Esophagus squamous epithelium (tissue), 5 donors: ENCODE measurements at regions of chr2 and their contacts with region 1.

Region 1: GRCh38 chr2:72770879-72771461 is 54.9 kb downstream of the EXOC6B start:
- DNase-seq: no peak
- H3K4me3 ChIP-seq: no peak overlapping the region
- H3K27ac ChIP-seq: no peak overlapping the region
- H3K4me1 ChIP-seq: peaks cover 0 to 2% (median under 1%) of the 10 kb centered on the region in 3 donors
- H3K27me3 ChIP-seq: no peaks in the 10 kb centered on the region
- CTCF ChIP-seq: peak; percentile 56 to 90 (median 84)
- POLR2A ChIP-seq: no peak

Region 2: DNA sequence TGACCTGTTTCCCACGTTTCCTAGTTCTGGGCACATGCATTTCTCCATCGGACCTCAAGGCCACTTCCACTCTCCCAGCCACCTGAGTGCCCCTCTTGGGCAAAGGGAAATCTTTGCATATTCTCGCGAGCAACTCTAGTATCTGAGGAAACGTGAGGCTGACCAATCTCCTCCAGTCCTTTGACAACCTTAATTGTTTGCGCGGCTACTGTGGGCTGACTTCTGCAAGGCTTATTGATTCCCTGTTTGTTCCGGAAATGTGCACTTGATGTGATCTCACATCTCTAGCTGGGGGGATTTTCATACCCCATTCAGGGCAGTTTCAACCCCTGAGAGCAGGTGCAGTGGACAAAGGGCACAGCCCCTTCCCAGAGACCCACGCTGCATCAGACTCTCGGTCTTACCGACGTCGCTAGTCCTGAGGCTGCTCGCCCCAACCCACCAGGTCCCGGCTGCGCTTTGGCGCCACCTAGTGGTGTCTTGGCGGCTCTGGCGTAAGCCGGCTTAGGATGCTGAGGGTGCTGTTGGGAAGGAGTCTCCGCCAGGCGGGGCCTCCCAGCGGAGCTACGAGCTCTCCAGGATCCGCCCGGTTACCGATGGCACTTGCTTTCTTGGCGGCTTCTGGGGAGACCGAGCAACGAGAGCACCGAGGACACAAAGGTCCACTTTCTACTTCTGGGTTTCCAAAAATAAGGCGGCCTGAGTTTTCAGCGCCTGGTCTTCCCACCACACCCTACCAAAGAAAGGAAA is 91.4 kb after region 1 on chr2:
- intact Hi-C with region 1: loop called (anchors 2 kb)
- DNase-seq: peak; percentile 27
- H3K4me3 ChIP-seq: peak overlapping the region in 2 of 4 donors; percentile 24 to 53
- H3K27ac ChIP-seq: no peak overlapping the region
- H3K4me1 ChIP-seq: peaks cover 8 to 13% (median 10%) of the 10 kb centered on the region in 3 donors
- H3K27me3 ChIP-seq: peaks cover 0 to 33% (median 1%) of the 10 kb centered on the region in 4 donors
- CTCF ChIP-seq: peak; percentile 82 to 98 (median 94)
- POLR2A ChIP-seq: no peak